ENCODE measurements at regions of chr19 and their contacts with region 1.

Region 1: DNA sequence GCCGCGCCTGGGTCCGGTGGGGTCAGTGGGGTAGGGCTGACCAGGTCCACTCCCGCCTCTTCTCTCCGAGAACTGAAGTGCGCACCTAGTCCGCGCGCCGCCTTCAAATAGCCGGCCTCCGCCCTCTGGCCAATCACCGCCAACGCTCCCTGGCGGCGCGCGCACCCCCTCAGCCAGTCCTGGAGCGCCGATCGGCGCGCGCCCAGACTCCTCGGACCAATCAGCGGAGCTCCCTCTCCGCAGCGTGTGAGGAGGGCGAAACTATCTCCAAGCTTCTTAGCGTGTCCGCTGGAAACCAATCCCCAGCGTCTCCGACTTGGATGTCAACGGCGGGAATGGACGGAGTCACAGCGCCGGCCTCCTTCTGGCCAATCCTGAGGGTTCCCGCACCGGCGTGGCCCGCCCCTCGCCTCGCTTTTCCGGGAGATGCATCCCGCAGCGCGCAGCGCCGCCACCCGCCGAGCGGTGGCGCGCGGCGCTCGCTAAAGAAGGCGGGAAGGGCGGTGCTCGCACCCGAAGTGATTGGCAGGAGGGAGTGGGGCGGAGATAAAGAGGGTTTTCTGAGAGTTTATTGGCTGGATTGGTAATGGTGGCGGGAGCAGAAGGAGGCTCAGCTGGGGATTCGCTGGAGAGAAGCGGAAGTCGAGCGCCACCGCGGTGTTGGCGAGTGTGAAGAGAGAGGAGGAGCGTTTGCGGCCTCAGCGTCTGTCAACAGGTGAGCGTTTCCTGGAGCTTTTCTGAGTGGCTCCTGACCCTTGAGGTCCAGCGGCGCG is at the start of gene ASF1B:
- DNase-seq: peak; percentile 98
- H3K4me3 Mint-ChIP-seq: peak within 1 kb of the TSS; percentile 83
- H3K27ac Mint-ChIP-seq: peak within 1 kb of the TSS; percentile 92
- H3K4me1 Mint-ChIP-seq: peaks cover 31% of the 10 kb centered on the region
- H3K27me3 Mint-ChIP-seq: no peaks in the 10 kb centered on the region
- total RNA-seq, gene ASF1B: 76.3 and 77.4 TPM in 2 replicates

Region 2: DNA sequence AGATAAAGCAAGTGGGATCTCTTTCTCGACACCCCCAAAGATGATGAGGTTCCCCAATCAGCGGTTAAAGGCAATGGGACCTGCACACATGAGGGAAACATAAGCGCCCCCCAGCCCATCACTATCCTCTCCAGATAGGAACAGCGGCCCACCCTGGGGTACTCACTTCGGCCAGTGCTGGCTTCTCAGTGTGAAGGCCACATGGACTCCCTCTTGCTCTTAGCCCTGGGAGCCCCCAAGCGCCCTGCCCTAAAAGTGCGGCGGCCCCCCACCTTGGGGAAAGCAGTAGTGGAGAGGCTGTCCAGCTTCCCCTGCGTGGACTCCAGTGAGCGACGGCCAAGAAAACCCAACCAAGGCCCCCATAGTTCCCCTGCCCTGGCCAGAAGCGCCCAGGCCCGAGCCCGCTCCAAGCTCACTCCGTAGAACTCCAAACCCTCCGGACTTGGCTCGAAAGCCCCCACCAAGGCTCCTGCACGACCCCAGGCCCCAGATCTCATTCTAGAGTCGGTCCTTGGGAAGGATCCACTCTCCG is 631.5 kb before region 1 on chr19:
- intact Hi-C with region 1: no loop called
- DNase-seq: no peak
- H3K4me3 Mint-ChIP-seq: no peak overlapping the region
- H3K27ac Mint-ChIP-seq: no peak overlapping the region
- H3K4me1 Mint-ChIP-seq: no peaks in the 10 kb centered on the region
- H3K27me3 Mint-ChIP-seq: peaks cover 47% of the 10 kb centered on the region

Region 3: GRCh38 chr19:13880059-13881043 is 256.3 kb before region 1 on chr19:
- intact Hi-C with region 1: loop called (anchors 1 kb)
- DNase-seq: peak; percentile 97
- H3K4me3 Mint-ChIP-seq: peak overlapping the region; percentile 66
- H3K27ac Mint-ChIP-seq: peak overlapping the region; percentile 89
- H3K4me1 Mint-ChIP-seq: peaks cover 27% of the 10 kb centered on the region
- H3K27me3 Mint-ChIP-seq: peaks cover 10% of the 10 kb centered on the region

Region 4: DNA sequence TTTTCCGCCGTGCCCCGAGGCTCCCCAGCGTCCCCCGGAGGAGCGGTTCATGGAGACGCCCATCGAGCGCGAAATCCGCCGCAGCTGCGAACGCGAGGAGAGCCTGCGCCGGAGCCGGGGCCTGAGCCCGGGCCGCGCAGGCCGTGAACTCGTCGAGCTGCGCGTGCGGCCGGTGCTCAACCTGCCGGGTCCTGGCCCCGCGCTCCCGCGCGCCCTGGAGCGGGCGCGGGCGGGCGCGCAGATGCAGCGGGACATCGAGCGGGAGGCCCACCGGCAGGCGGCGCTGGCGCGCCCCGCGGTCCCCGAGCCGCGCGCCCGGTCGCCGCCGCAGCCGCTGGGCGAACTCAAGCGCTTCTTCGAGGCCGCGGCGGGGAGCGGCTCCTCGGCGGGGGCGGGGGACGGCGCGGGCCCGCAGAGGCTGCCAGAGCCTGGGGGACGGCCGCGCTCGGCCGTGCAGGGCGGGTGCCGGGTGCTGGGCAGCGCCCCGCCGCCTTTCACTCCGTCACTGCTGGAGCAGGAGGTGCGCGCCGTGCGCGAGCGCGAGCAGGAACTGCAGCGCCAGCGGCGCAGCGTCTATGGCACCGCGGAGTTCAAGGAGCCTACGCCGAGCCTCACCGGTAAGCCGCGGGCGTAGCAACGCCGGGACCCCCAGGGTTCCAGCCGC is 63.3 kb before region 1 on chr19:
- intact Hi-C with region 1: loop called (anchors 2 kb)
- DNase-seq: peak; percentile 78
- H3K4me3 Mint-ChIP-seq: peak overlapping the region; percentile 97
- H3K27ac Mint-ChIP-seq: peak overlapping the region; percentile 98
- H3K4me1 Mint-ChIP-seq: peaks cover 16% of the 10 kb centered on the region
- H3K27me3 Mint-ChIP-seq: peaks cover 5% of the 10 kb centered on the region

Region 5: DNA sequence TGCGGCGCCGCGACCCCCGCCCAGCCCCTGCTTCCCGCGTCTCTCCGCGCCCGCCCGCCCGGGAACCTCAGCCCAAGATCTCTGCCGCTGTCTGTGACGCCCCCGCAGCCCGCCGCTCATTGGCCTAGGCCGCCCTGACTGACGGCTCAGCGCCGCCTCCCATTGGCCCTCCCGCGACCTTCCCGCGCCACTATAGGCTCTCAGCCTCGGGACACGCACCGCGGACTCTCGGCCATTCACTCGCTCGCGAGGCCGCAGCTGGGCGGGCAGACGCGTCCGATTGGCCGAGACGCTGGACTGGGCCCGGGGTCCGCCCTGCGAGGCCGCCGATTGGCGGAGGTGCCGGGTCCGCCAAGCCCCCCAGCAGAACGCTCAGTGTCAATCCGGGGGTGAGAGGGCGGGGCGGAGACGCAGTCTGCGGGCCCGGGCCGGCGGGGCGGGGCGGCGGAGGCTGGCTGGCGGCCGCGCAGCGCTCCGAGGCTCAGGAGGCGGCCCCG is 19.0 kb before region 1 on chr19 and contains the start of gene PRKACA:
- intact Hi-C with region 1: loop called (anchors 1 kb)
- DNase-seq: peak; percentile 99
- H3K4me3 Mint-ChIP-seq: peak within 1 kb of the TSS; percentile 94
- H3K27ac Mint-ChIP-seq: peak within 1 kb of the TSS; percentile 97
- H3K4me1 Mint-ChIP-seq: peaks cover 39% of the 10 kb centered on the region
- H3K27me3 Mint-ChIP-seq: peaks cover 2% of the 10 kb centered on the region
- total RNA-seq, gene PRKACA: 58.6 and 63.7 TPM in 2 replicates

Region 6: DNA sequence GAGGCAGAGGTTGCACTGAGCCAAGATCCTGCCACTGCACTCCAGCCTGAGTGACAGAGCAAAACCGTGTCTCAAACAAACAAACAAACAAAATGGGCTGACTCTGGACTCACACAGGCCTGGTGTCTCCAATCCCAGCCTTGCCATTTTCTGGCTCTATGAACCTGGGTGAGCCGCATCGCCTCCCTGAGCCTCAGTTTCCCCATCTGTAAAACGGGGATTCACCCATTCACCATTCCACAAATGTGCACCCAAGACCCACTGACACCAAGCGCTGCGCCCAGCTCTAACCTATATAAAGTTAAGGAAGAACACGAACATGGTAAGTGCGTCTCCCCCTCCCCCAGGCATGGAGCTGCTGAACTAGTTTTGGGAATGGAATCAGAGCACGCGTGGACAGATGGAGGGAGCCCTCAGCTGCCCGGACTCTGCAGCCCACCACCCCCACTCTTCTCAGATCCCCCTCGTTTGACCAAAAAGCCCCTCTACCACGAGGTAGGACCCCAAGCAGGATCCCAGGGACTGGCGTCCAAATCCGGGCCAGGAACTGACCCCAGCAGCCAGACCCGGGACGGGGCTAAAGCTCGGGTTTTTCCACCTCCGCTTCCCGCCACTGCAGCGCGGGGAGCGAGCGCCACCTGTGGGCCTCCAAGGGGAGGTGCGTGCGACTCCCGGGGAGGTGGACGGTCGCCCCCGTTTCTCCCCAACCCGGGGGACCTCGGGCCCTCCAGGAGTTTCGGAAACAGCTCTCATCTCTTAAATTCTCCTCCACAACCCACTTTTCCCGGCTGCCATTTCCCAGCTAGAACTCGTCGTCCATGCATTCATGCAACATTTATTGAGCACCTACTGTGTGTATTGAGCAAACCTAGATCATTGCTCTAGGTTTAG is 211.5 kb after region 1 on chr19:
- intact Hi-C with region 1: loop called (anchors 1 kb)
- DNase-seq: peak; percentile 61
- H3K4me3 Mint-ChIP-seq: peak overlapping the region; percentile 58
- H3K27ac Mint-ChIP-seq: peak overlapping the region; percentile 47
- H3K4me1 Mint-ChIP-seq: peaks cover 18% of the 10 kb centered on the region
- H3K27me3 Mint-ChIP-seq: peaks cover 5% of the 10 kb centered on the region

Region 7: GRCh38 chr19:14419106-14419813 is 282.6 kb after region 1 on chr19 and contains the start of gene DDX39A:
- intact Hi-C with region 1: loop called (anchors 1 kb)
- DNase-seq: peak; percentile 98
- H3K4me3 Mint-ChIP-seq: peak within 1 kb of the TSS; percentile 98
- H3K27ac Mint-ChIP-seq: peak within 1 kb of the TSS; percentile 100
- H3K4me1 Mint-ChIP-seq: peaks cover 29% of the 10 kb centered on the region
- H3K27me3 Mint-ChIP-seq: no peaks in the 10 kb centered on the region
- total RNA-seq, gene DDX39A: 273 and 287 TPM in 2 replicates

Measured in activated T-helper 1 cell treated with anti-CD3 and anti-CD28 coated beads, Interleukin-12 subunit alpha, Interleukin-12 subunit beta, Interleukin-2, Interleukin-4 antibody, amounts not matched to agents 30 ng/mL and 10 ng/mL and 1 ng/mL, durations not matched to agents 14 hours and 24 hours and 36 hours (primary cell).